MCF 10A (cell line): ENCODE measurements at regions of chr2 and their contacts with region 1.

Region 1: DNA sequence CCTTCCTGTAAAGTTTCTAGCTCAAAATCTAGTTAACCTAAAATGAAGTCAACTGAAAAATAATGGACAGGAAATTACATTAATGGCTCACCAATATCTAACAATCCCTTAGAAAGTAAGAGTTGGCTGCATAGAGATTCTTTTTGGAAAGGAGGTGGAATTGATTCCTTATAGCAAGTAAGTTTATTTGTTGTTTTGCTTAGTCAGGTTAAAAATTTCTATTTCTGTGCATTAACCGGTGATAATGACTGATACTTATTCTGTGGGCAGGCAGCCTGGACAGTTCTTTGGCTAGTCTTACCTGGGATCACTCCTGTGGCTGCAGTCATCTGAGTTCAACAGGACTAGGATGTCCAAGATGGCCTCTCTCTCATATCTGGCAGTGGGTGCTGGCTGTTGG is 6.9 kb upstream of the BCL2L11 start:
- DNase-seq: no peak
- H3K4me3 Mint-ChIP-seq: no peak overlapping the region
- H3K27ac Mint-ChIP-seq: no peak overlapping the region
- H3K4me1 Mint-ChIP-seq: peaks cover 8% of the 10 kb centered on the region
- H3K27me3 Mint-ChIP-seq: no peaks in the 10 kb centered on the region
- CTCF ChIP-seq: no peak

Region 2: GRCh38 chr2:110812726-110813645 is 300.9 kb before region 1 on chr2:
- CTCF ChIA-PET with region 1: interaction called, 16 read pairs
- POLR2A ChIA-PET with region 1: no interaction called
- intact Hi-C with region 1: loop called (anchors 2 kb)
- DNase-seq: no peak
- H3K4me3 Mint-ChIP-seq: no peak overlapping the region
- H3K27ac Mint-ChIP-seq: no peak overlapping the region
- H3K4me1 Mint-ChIP-seq: peaks cover 14% of the 10 kb centered on the region
- H3K27me3 Mint-ChIP-seq: peaks cover 35% of the 10 kb centered on the region
- CTCF ChIP-seq: no peak

Region 3: DNA sequence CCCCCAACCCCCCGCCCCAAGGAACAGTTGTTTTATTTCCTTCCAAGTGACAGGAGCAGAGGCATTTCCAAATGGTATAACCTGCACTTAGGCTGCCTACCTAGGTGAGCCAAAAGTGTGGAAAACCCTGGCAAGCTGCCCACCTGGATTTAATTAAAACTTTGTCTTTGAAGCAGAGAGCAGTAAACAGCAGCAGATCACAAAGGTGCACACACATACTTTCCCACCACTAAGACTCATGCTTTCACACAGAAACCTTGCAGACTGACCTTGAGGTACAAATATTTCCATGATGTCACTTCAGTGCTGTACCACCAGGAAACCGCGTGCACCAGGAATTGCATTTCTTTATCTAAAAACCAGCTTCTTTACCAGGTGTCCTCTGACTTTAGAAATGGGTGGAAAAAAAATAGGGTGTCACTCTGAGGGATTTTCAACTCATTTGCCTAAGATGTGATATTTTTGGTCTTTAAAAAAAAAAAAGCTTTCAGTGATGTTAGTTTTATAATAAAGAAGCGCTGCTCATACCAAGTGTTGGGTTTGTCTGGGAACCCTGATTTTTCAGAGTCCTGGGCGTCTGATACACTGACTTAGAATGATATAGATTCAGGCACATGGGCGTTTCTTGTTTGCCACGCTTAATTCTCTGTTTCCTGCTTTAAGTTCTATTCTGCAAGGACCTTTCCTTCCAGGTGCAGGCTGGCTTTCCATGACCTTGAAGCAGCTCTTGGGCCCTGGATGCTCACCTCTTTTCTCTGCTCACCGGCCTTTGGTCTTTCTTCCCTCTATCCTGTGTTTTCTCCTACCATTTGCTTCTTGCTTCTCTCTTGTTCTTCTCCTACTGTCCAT is 63.8 kb before region 1 on chr2:
- CTCF ChIA-PET with region 1: no interaction called
- POLR2A ChIA-PET with region 1: no interaction called
- intact Hi-C with region 1: no loop called
- DNase-seq: no peak
- H3K4me3 Mint-ChIP-seq: no peak overlapping the region
- H3K27ac Mint-ChIP-seq: no peak overlapping the region
- H3K4me1 Mint-ChIP-seq: no peaks in the 10 kb centered on the region
- H3K27me3 Mint-ChIP-seq: peaks cover 88% of the 10 kb centered on the region
- CTCF ChIP-seq: no peak